Heart right ventricle (tissue), 16 donors: ENCODE measurements at regions of chr22 and their contacts with region 1.

Region 1: GRCh38 chr22:36123673-36124630 is 36.6 kb downstream of the APOL3 start:
- DNase-seq: peak; percentile 94 to 96
- ATAC-seq: peak; percentile 96 to 99 (median 98)
- H3K4me3 ChIP-seq: peak overlapping the region in 9 of 10 donors; percentile 6 to 44 (median 29)
- H3K27ac ChIP-seq: peak overlapping the region; percentile 64 to 91 (median 81)
- H3K4me1 ChIP-seq: peaks cover 0 to 17% (median 7%) of the 10 kb centered on the region in 9 donors
- H3K27me3 ChIP-seq: no peaks in the 10 kb centered on the region
- CTCF ChIP-seq: peak; percentile 96 to 99 (median 98)

Region 2: GRCh38 chr22:35430897-35431322 is 693.0 kb before region 1 on chr22:
- intact Hi-C with region 1: loop called in 4 of 10 experiments (anchors 2 to 10 kb)
- DNase-seq: peak; percentile 90 to 91
- ATAC-seq: peak; percentile 94 to 99 (median 98)
- H3K4me3 ChIP-seq: no peak overlapping the region
- H3K27ac ChIP-seq: peak overlapping the region in 5 of 10 donors; percentile 14 to 69 (median 48)
- H3K4me1 ChIP-seq: peaks cover 0 to 14% (median 8%) of the 10 kb centered on the region in 9 donors
- H3K27me3 ChIP-seq: no peaks in the 10 kb centered on the region
- CTCF ChIP-seq: peak; percentile 94 to 99 (median 97)

Region 3: DNA sequence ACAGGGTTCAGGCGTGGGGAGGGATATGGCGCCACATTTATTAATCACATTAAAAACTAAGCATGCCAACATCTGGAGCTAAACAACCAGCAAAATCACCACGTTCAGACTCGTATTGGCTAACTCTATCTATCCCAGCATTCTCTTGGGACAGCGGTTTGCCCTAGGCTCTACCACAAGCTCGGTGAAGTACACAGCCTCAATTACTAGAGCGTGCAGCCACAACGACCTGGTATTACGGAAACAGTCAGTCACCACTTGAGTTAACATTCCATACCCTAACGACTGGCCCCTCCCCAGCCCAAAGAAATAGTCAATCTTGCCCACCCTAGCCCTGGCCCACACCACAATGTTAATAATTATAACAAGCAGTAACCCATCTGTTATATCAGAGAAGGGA is 374.1 kb before region 1 on chr22:
- intact Hi-C with region 1: loop called in 2 of 10 experiments (anchors 10 kb)
- DNase-seq: no peak
- ATAC-seq: no peak
- H3K4me3 ChIP-seq: no peak overlapping the region
- H3K27ac ChIP-seq: no peak overlapping the region
- H3K4me1 ChIP-seq: peaks cover 0 to 60% (median 42%) of the 10 kb centered on the region in 9 donors
- H3K27me3 ChIP-seq: no peaks in the 10 kb centered on the region
- CTCF ChIP-seq: no peak

Region 4: DNA sequence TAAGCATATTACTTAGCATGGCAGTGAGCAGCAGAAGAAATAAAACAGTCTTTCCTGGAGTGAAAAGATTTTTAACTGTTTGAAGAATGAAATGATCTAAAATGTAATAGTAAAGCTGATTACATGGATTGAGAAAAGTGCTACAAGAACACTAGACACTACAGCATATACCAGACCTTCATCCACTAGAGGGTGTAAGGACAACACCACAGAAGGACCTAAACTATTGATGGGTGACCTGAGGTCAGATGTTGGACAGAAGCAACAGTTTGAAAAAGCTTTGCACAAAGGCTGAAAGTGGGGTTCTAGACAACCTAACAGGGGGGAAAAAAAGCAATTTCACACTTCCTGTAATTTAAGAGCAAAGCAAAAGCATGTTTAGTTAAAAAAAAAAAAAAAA is 193.0 kb before region 1 on chr22:
- intact Hi-C with region 1: loop called (anchors 1 to 5 kb)
- DNase-seq: peak in 1 of 2 donors; percentile 62
- ATAC-seq: peak; percentile 81 to 98 (median 95)
- H3K4me3 ChIP-seq: no peak overlapping the region
- H3K27ac ChIP-seq: no peak overlapping the region
- H3K4me1 ChIP-seq: peaks cover 0 to 17% (median 5%) of the 10 kb centered on the region in 9 donors
- H3K27me3 ChIP-seq: no peaks in the 10 kb centered on the region
- CTCF ChIP-seq: peak; percentile 44 to 88 (median 73)

Region 5: GRCh38 chr22:36065775-36066559 is 58.0 kb before region 1 on chr22:
- intact Hi-C with region 1: loop called (anchors 1 to 10 kb)
- DNase-seq: peak; percentile 87 to 92
- ATAC-seq: peak; percentile 88 to 96 (median 95)
- H3K4me3 ChIP-seq: peak overlapping the region; percentile 30 to 73 (median 57)
- H3K27ac ChIP-seq: peak overlapping the region; percentile 66 to 93 (median 86)
- H3K4me1 ChIP-seq: peaks cover 0 to 19% (median 7%) of the 10 kb centered on the region in 9 donors
- H3K27me3 ChIP-seq: no peaks in the 10 kb centered on the region
- CTCF ChIP-seq: peak; percentile 99 to 100 (median 100)